Heart right ventricle (tissue), 16 donors: ENCODE measurements at regions of chr14 and their contacts with region 1.

Region 1: DNA sequence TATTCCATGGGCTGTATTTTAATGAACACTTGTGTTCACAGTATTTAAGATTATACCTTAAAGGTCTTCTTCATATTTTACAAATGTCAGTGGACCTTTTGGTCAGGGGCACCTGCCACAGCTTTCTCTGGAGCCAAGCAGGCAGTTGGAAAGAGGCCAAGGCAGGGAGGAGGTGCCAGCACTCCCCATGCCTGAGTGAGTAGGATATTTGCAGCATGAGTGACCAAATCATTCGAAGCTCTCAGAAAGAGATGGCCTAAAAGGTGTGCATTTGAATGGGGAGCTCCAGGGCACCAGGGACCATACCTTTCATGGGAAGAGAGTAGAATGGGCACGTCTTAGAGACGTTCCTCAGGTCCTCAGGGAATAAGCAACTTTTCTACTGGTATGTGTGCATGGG is 121.6 kb downstream of the GPR135 start:
- DNase-seq: peak; percentile 49 to 62
- ATAC-seq: peak; percentile 21 to 80 (median 61)
- H3K4me3 ChIP-seq: no peak overlapping the region
- H3K27ac ChIP-seq: peak overlapping the region in 8 of 10 donors; percentile 63 to 78 (median 72)
- H3K4me1 ChIP-seq: peaks cover 10 to 65% (median 43%) of the 10 kb centered on the region in 9 donors
- H3K27me3 ChIP-seq: no peaks in the 10 kb centered on the region
- CTCF ChIP-seq: no peak

Region 2: DNA sequence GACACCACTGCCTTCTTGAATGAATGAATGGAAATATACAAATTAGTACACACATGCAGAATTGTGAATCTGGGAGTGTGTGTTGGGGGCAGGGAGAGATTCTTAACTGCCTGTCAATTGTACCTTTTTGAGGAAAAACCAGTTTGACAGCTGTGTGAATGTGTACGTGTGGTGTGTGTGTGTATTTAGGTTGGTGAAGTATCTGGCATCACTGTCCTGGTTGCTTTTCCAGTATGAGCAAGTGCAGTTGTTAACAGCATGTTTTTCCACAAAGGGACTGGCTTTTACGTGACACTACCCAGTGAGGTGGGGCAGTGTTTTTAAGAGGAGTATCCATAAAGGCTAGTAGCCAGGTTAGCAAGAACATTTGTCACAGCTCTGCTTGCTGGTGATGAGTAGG is 99.0 kb before region 1 on chr14:
- intact Hi-C with region 1: no loop called
- DNase-seq: no peak
- ATAC-seq: peak in 2 of 8 donors; percentile 23 to 44
- H3K4me3 ChIP-seq: no peak overlapping the region
- H3K27ac ChIP-seq: no peak overlapping the region
- H3K4me1 ChIP-seq: peaks cover 0 to 83% (median 32%) of the 10 kb centered on the region in 9 donors
- H3K27me3 ChIP-seq: no peaks in the 10 kb centered on the region
- CTCF ChIP-seq: no peak

Region 3: GRCh38 chr14:59360923-59361794 is 17.6 kb after region 1 on chr14:
- intact Hi-C with region 1: loop called in 2 of 10 experiments (anchors 1 to 2 kb)
- DNase-seq: peak; percentile 74 to 81
- ATAC-seq: peak; percentile 41 to 80 (median 72)
- H3K4me3 ChIP-seq: peak overlapping the region in 5 of 10 donors; percentile 0 to 38 (median 14)
- H3K27ac ChIP-seq: peak overlapping the region; percentile 21 to 91 (median 86)
- H3K4me1 ChIP-seq: peaks cover 13 to 87% (median 71%) of the 10 kb centered on the region in 9 donors
- H3K27me3 ChIP-seq: no peaks in the 10 kb centered on the region
- CTCF ChIP-seq: peak in 3 of 9 donors; percentile 27 to 31 (median 28)